ENCODE measurements at regions of chr16 and their contacts with region 1.

Region 1: GRCh38 chr16:58392215-58393137 is at the start of gene GINS3:
- DNase-seq: peak; percentile 68 to 78
- H3K4me3 ChIP-seq: peak within 1 kb of the TSS; percentile 85
- H3K27ac ChIP-seq: peak within 1 kb of the TSS; percentile 67
- H3K4me1 ChIP-seq: peaks cover 17% of the 10 kb centered on the region
- H3K27me3 ChIP-seq: no peaks in the 10 kb centered on the region
- CTCF ChIP-seq: no peak
- total RNA-seq, gene GINS3: 11.3 and 12.4 TPM in 2 replicates

Region 2: GRCh38 chr16:58377932-58378331 is 14.5 kb before region 1 on chr16:
- CTCF ChIA-PET with region 1: no interaction called
- POLR2A ChIA-PET with region 1: no interaction called
- intact Hi-C with region 1: no loop called
- DNase-seq: no peak
- H3K4me3 ChIP-seq: no peak overlapping the region
- H3K27ac ChIP-seq: no peak overlapping the region
- H3K4me1 ChIP-seq: no peaks in the 10 kb centered on the region
- H3K27me3 ChIP-seq: no peaks in the 10 kb centered on the region
- CTCF ChIP-seq: no peak

Region 3: DNA sequence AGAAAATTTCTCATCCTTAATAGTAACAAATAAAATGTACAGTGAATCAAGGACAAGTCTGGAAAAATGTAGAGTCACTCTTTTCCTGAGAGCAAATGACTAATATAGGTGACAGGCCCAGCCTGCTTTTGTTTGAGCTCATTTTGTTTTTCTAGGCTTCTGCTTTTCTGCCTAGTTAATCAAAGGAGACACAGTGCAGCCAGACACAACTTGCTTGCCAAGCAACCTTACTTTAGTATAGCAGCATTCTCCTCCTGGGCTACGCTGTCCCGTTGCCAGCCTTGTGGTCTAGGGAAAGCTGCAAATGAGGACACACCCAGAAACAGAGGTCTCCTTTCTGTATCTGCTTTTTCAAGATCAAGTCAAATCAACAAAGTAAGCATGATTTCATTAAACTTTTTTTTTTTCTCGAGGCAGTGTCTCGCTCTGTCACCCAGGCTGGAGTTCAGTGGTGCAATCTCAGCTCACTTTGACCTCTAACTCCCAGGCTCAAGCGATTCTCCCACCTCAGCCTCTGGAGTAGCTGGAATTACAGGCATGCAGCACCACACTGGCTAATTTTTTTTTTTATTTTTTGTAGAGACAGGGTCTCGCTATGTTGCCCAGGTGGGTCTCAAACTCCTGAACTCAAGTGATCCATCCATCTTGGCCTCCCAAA is 17.0 kb after region 1 on chr16:
- CTCF ChIA-PET with region 1: no interaction called
- POLR2A ChIA-PET with region 1: no interaction called
- intact Hi-C with region 1: loop called (anchors 1 kb)
- DNase-seq: peak; percentile 83 to 94
- H3K4me3 ChIP-seq: no peak overlapping the region; the same call in 1 of the 2 replicates
- H3K27ac ChIP-seq: peak overlapping the region; percentile 98
- H3K4me1 ChIP-seq: peaks cover 51% of the 10 kb centered on the region
- H3K27me3 ChIP-seq: no peaks in the 10 kb centered on the region
- CTCF ChIP-seq: no peak